ENCODE measurements at regions of chr5 and their contacts with region 1.

Region 1: DNA sequence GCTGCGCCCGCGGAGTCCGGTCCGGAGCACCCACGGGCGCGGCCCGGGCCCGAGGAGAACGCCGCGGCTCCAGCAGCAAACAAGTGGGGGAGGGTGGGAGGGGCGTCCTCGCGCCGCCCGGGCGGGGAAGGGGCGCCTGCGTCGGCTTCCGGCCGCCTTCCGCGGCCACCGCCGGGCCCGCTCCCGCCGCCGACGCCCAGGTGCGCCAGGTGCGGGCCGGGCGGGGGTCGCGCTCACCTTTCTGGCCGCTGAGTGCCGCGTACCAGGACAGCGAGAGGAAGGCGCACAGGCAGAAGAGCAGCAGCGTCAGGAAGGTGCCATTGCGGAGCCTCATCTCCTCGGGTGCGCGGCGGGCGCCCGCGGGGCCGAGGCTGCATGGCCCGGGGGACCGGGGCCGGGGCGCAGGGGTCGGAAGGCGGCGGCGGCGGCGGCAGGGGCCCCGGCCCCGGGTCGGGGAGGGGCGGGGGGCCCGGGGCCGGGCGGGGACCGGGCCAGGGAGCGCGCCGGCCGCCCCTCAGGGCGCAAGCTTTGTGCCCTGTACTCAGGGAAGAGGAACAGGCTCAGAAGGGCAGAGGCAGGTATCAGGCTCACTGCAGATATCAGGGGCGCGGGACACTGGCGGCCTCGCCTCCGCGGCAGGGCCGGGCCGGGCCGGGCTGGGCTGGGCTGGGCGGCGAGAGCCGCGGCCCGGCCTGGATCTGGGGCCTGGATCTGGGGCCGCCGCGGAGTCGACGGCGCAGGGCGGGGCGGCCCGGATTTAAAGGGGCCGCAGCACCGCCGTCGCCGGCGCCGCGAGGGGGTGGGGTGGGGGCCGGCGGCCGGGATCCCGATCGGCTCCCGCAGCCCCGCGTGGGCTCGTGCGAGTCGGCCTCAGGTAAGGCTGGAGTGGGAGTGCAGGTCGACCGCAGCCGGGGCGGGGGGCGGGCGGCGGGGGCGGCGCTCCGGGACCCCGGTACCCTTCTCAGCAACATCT is at the start of gene MGAT4B:
- DNase-seq: peak; percentile 83
- ATAC-seq: peak; percentile 80
- H3K4me3 ChIP-seq: peak within 1 kb of the TSS; percentile 7 to 72 (median 67)
- H3K4me3 Mint-ChIP-seq: peak within 1 kb of the TSS; percentile 71
- H3K27ac ChIP-seq: peak within 1 kb of the TSS; percentile 55 to 62
- H3K27ac Mint-ChIP-seq: peak within 1 kb of the TSS; percentile 73
- H3K4me1 ChIP-seq: peaks cover 28 to 36% of the 10 kb centered on the region in 2 donors
- H3K4me1 Mint-ChIP-seq: peaks cover 34% of the 10 kb centered on the region
- H3K27me3 ChIP-seq: no peaks in the 10 kb centered on the region
- H3K27me3 Mint-ChIP-seq: no peaks in the 10 kb centered on the region
- CTCF ChIP-seq: no peak
- total RNA-seq, gene MGAT4B: 139 and 165 TPM in 2 replicates

Region 2: DNA sequence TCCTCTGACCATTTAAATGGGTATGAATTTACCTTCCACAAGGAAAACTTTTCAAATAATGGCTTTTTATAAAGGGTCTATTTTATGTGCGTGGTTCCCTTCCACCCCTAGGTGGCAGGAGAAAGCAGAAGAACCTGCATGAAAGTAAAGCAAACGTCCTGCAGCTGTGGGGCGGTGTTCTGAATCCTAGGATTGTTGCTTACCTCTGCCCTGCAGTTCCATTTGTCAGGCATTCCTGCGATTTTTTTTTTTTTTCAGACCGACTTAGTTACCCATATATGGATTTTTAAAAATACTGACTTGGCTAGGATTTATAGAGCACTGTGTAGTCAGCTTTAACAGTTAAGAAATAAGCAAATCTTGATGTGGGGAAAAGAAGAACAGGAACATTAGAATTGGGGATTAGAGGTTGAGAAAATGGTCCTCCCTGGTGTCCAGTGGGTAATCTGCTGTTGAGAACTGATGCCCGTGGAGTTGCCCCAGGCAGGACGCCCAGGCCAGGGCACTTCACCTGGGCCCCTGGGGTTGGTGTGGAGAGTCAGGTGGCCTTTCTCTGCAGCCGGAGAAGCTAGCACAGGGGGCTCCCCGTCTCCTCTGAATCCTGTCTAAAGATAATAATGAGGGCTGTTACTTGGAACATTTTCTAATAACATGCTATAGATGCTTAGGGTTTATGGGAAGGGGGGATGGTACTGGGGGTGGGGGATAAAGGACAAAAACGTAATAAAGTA is 43.2 kb before region 1 on chr5:
- CTCF ChIA-PET with region 1: interaction called, 13 read pairs
- POLR2A ChIA-PET with region 1: no interaction called
- intact Hi-C with region 1: no loop called
- DNase-seq: peak; percentile 71
- ATAC-seq: peak; percentile 62
- H3K4me3 ChIP-seq: no peak overlapping the region
- H3K4me3 Mint-ChIP-seq: no peak overlapping the region
- H3K27ac ChIP-seq: no peak overlapping the region
- H3K27ac Mint-ChIP-seq: no peak overlapping the region
- H3K4me1 ChIP-seq: peaks cover 17 to 32% of the 10 kb centered on the region in 2 donors
- H3K4me1 Mint-ChIP-seq: peaks cover 45% of the 10 kb centered on the region
- H3K27me3 ChIP-seq: no peaks in the 10 kb centered on the region
- H3K27me3 Mint-ChIP-seq: no peaks in the 10 kb centered on the region
- CTCF ChIP-seq: peak; percentile 96

Region 3: GRCh38 chr5:179836225-179837019 is 29.9 kb after region 1 on chr5:
- CTCF ChIA-PET with region 1: interaction called, 12 read pairs
- POLR2A ChIA-PET with region 1: interaction called, 4 read pairs
- intact Hi-C with region 1: loop called (anchors 5 kb)
- DNase-seq: peak; percentile 74
- ATAC-seq: peak; percentile 84
- H3K4me3 ChIP-seq: no peak overlapping the region
- H3K4me3 Mint-ChIP-seq: no peak overlapping the region
- H3K27ac ChIP-seq: peak overlapping the region in 1 of 2 donors; percentile 66
- H3K27ac Mint-ChIP-seq: peak overlapping the region; percentile 77
- H3K4me1 ChIP-seq: peaks cover 3 to 8% of the 10 kb centered on the region in 2 donors
- H3K4me1 Mint-ChIP-seq: peaks cover 9% of the 10 kb centered on the region
- H3K27me3 ChIP-seq: no peaks in the 10 kb centered on the region
- H3K27me3 Mint-ChIP-seq: no peaks in the 10 kb centered on the region
- CTCF ChIP-seq: no peak

Region 4: DNA sequence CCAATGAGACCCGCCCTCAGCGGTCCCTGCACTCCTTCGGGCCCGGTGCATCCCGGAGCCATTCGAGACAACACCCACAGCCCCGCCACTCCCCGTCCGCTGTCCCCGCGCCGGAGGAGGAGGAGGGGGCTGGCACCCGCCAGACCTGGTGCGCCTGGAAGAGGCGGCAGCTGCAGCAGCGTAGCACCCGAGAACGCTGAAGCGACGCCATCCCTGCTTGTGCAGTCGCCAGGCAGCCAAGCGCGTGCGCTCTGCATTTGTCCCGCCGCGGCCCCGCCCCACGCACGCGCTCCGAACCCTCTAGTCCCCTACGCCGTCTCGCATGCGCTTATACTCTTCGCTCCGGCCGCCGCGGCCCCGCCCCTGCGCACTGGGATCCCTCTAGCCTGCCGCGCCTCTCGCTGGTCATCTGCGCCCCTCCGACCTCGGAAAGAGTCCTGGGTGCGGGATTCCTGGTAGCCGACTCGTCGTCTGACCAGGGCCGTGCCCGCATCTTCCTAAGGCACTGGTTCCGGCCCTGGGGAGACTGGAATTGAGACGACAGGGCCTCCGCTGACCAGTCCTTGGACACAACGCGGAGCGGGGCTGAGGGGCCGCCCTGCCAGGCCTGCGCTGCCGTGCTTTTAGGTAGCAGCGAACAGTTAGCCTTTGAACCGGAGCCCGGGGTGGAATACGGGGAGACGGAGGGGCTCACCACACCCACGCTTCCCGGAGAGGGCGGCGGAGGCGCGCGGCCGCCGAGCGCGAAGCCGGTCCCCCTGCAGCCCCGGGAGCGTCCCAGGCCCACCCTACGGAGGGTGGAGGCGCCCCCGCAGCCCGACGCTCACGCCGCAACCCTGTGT is 52.3 kb after region 1 on chr5 and contains the start of gene MRNIP:
- CTCF ChIA-PET with region 1: interaction called, 21 read pairs
- POLR2A ChIA-PET with region 1: interaction called, 4 read pairs
- intact Hi-C with region 1: loop called (anchors 1 kb)
- DNase-seq: peak; percentile 93
- ATAC-seq: peak; percentile 94
- H3K4me3 ChIP-seq: peak within 1 kb of the TSS; percentile 71 to 95 (median 90)
- H3K4me3 Mint-ChIP-seq: peak within 1 kb of the TSS; percentile 89
- H3K27ac ChIP-seq: peak within 1 kb of the TSS; percentile 63 to 80
- H3K27ac Mint-ChIP-seq: peak within 1 kb of the TSS; percentile 97
- H3K4me1 ChIP-seq: peaks cover 5 to 15% of the 10 kb centered on the region in 2 donors
- H3K4me1 Mint-ChIP-seq: peaks cover 31% of the 10 kb centered on the region
- H3K27me3 ChIP-seq: no peaks in the 10 kb centered on the region
- H3K27me3 Mint-ChIP-seq: no peaks in the 10 kb centered on the region
- CTCF ChIP-seq: no peak
- total RNA-seq, gene MRNIP: 152 and 160 TPM in 2 replicates

Region 5: DNA sequence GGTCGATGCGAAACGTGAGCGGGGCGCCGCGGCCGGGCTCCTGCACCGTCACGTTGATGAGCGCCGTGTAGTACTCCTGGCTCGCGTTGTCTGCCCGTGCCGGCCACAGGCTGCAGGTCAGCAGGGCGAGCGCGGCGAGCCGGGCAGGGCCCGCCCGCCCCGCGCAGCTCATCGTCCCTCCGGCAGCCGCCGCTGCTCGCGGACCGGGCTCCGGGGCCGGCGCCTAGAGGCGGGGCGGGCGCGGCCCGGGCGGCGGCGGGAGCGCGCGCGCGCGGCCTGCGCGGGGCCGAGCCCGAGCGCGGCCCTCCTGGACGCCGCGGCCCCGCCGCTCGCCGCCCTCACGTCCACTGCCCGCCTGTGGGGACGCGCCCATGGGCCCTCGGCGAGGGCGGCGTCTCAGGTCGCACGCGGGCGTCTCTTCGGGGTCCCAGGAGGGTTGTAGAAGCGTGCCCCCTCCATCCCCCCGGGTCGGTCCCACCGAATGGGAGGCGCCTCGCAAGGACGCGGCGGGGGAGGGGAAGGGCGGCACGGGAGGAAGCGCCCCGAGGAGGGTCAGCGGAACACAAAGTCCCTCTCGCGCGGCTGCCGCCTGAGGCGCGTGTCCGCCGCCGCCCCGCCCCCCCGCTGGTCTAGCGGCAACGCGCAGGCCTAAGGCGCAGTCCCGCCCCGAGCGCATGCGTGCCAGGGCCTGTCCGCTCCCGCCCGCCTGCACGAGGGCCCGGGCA is 265.2 kb after region 1 on chr5 and contains the start of gene RNF130:
- CTCF ChIA-PET with region 1: interaction called, 5 read pairs
- POLR2A ChIA-PET with region 1: no interaction called
- intact Hi-C with region 1: loop called (anchors 5 kb)
- DNase-seq: peak; percentile 90
- ATAC-seq: peak; percentile 75
- H3K4me3 ChIP-seq: peak within 1 kb of the TSS; percentile 66 to 85 (median 79)
- H3K4me3 Mint-ChIP-seq: peak within 1 kb of the TSS; percentile 89
- H3K27ac ChIP-seq: peak within 1 kb of the TSS; percentile 64 to 73
- H3K27ac Mint-ChIP-seq: peak within 1 kb of the TSS; percentile 84
- H3K4me1 ChIP-seq: peaks cover 25 to 30% of the 10 kb centered on the region in 2 donors
- H3K4me1 Mint-ChIP-seq: peaks cover 32% of the 10 kb centered on the region
- H3K27me3 ChIP-seq: no peaks in the 10 kb centered on the region
- H3K27me3 Mint-ChIP-seq: peaks cover 7% of the 10 kb centered on the region
- CTCF ChIP-seq: no peak
- total RNA-seq, gene RNF130: 25.8 and 28.4 TPM in 2 replicates